ENCODE measurements at regions of chr6 and their contacts with region 1.

Region 1: GRCh38 chr6:75556240-75556639 is 45.4 kb upstream of the SENP6 start:
- DNase-seq: no peak
- ATAC-seq: no peak
- H3K4me3 ChIP-seq: no peak overlapping the region
- H3K27ac ChIP-seq: no peak overlapping the region
- H3K4me1 ChIP-seq: no peaks in the 10 kb centered on the region
- H3K27me3 ChIP-seq: no peaks in the 10 kb centered on the region
- CTCF ChIP-seq: no peak

Region 2: GRCh38 chr6:74213995-74214394 is 1342.2 kb before region 1 on chr6:
- intact Hi-C with region 1: loop called in 1 of 10 experiments (anchors 5 kb)
- DNase-seq: no peak
- ATAC-seq: no peak
- H3K4me3 ChIP-seq: no peak overlapping the region
- H3K27ac ChIP-seq: no peak overlapping the region
- H3K4me1 ChIP-seq: no peaks in the 10 kb centered on the region
- H3K27me3 ChIP-seq: no peaks in the 10 kb centered on the region
- CTCF ChIP-seq: no peak